Panc1 (cell line): ENCODE measurements at regions of chr16 and their contacts with region 1.

Region 1: DNA sequence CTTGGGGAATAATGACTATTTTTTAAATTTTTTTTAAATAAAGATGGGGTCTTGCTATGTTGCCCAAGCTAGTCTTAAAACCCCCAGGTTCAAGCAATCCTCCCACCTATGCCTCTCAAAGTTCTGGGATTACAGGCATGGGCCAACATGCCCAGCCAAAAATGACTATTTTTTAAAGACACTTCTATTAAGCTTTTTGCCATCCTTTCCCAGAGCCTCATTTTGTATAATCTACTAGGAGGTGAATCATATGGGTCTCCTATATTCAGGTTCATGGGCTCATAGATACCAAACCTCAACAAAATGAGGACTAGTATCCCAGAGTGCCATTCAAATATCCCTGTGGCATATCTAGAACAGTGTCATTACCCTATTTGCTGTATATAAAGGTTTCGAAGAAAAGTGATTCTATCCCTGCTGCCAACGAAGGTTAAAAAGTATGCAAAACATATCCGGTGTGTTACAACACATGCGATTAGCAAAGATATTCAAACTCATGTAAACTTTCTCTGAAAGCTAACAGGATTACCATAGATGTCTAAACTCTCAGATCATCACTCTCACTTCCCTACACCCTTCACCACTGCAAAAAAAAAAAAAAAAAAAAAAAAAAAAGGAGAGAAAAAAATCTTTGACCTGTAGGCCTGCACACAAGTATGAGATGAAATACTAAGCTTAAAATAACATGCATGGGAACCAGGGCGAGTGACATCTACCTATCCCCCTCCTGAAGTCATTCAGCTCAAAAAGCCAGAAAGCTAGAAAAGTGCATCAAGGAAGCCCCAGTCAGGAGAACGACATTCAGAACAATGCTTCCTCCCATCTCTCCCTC is 23.5 kb downstream of the XPO6 start:
- DNase-seq: no peak
- ATAC-seq: no peak
- H3K4me3 ChIP-seq: no peak overlapping the region
- H3K27ac ChIP-seq: no peak overlapping the region
- H3K4me1 ChIP-seq: peaks cover 9% of the 10 kb centered on the region
- H3K27me3 ChIP-seq: no peaks in the 10 kb centered on the region
- CTCF ChIP-seq: no peak

Region 2: GRCh38 chr16:27787665-27788064 is 400.6 kb before region 1 on chr16:
- CTCF ChIA-PET with region 1: no interaction called
- POLR2A ChIA-PET with region 1: interaction called, 12 read pairs
- in situ Hi-C with region 1: no loop called
- intact Hi-C with region 1: no loop called
- DNase-seq: no peak
- ATAC-seq: no peak
- H3K4me3 ChIP-seq: no peak overlapping the region
- H3K27ac ChIP-seq: no peak overlapping the region
- H3K4me1 ChIP-seq: no peaks in the 10 kb centered on the region
- H3K27me3 ChIP-seq: no peaks in the 10 kb centered on the region
- CTCF ChIP-seq: no peak

Region 3: DNA sequence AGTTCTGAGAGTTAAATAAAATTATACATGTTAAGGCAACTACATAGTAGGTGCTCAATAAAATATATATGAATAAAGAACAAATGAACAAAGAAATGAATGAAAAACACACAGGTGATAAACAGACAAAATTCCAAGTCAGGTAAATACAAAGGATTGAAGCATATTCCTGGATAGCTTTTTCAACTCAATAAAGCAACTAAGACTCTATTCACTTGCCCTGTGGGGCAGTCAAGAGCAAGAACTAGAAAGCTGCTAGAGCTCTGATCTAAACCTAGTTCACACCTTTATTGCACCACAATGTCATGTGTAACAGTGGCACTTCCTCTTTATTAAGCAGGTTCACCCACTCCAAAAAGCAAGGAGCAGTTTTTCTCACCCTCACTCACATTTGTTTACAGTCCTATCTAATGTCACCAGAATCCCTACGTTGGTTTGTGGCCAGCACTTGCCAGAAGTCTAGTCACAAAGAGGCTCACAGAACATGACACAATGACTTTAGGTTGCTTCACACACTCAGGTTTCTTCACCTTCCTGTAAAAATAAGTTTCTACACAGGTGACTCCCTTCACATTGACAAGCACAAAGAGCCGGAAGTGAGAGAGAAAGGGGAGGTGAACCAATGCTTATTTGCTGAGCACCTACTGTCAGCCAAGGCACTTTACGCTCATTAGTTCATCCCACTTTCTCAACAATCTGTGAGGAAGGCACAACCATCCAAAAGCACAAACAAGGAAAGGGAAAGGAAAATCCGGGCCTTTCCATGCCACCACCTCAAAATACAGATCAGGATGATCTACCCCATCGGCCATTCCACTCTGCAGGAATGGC is 47.3 kb before region 1 on chr16:
- CTCF ChIA-PET with region 1: no interaction called
- POLR2A ChIA-PET with region 1: no interaction called
- in situ Hi-C with region 1: no loop called
- intact Hi-C with region 1: no loop called
- DNase-seq: no peak
- ATAC-seq: no peak
- H3K4me3 ChIP-seq: no peak overlapping the region
- H3K27ac ChIP-seq: no peak overlapping the region
- H3K4me1 ChIP-seq: no peaks in the 10 kb centered on the region
- H3K27me3 ChIP-seq: no peaks in the 10 kb centered on the region
- CTCF ChIP-seq: no peak

Region 4: DNA sequence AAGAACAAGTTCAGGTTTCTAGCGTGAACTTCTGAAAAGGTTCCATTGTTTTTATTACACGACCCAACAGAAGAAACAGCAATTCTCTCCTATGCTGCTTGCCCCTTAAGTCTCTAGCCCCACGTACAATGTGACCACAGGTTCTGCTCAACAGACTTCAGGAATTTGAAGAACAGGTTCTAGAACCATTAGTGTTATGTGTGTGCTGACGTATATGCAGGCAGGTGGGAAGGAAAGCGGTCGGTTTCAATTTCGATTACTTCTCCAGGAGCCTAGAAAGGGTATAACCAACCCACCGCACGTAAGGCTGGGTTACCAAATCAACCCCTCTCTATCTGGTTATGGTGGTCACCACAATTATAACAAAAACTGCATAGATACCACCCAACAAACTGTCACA is 16.0 kb before region 1 on chr16:
- CTCF ChIA-PET with region 1: no interaction called
- POLR2A ChIA-PET with region 1: interaction called, 14 read pairs
- in situ Hi-C with region 1: no loop called
- intact Hi-C with region 1: no loop called
- DNase-seq: no peak
- ATAC-seq: no peak
- H3K4me3 ChIP-seq: no peak overlapping the region
- H3K27ac ChIP-seq: no peak overlapping the region
- H3K4me1 ChIP-seq: no peaks in the 10 kb centered on the region
- H3K27me3 ChIP-seq: no peaks in the 10 kb centered on the region
- CTCF ChIP-seq: no peak

Region 5: DNA sequence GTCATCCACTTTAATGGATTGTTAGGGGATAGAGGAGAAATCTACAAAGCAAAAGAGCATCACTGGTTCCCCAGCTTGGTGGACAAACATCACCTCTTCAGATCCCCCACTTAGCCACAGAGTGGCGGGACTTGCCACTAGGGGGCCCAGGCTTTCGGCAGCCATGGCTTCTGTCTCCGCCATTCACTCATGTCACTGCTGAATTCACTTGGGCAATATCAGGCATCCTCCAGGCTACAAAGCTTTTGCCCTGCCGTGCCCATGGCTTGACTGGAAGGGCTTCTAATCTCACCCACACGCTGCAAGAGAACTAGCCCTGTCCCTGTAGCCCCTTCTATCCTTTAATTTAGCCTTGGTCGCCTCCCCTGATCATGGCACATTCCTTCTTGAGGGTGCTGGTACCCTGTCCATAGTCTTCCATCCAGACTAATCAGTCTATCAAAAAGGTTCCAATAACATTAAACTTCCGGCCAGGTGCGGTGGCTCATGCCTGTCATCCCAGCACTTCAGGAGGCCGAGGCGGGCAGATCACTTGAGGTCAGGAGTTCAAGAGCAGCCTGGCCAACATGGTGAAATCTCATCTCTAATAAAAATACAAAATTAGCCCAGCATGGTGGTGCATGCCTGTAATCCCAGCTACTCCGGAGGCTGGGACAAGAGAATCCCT is 138.8 kb after region 1 on chr16:
- CTCF ChIA-PET with region 1: no interaction called
- POLR2A ChIA-PET with region 1: no interaction called
- in situ Hi-C with region 1: no loop called
- intact Hi-C with region 1: no loop called
- DNase-seq: no peak
- ATAC-seq: peak; percentile 64; the same call in 1 of the 2 replicates
- H3K4me3 ChIP-seq: no peak overlapping the region
- H3K27ac ChIP-seq: no peak overlapping the region
- H3K4me1 ChIP-seq: peaks cover 5% of the 10 kb centered on the region; the same call in 1 of the 2 replicates
- H3K27me3 ChIP-seq: no peaks in the 10 kb centered on the region
- CTCF ChIP-seq: peak; percentile 92